ENCODE measurements at regions of chr3 and their contacts with region 1.

Region 1: GRCh38 chr3:14947886-14948555 is 638 bp downstream of the NR2C2 start:
- DNase-seq: peak; percentile 94 to 96
- H3K4me3 ChIP-seq: peak overlapping the region; percentile 79 to 95 (median 79)
- H3K27ac ChIP-seq: peak overlapping the region; percentile 97 to 99
- H3K4me1 ChIP-seq: peaks cover 0 to 9% of the 10 kb centered on the region in 2 donors
- H3K27me3 ChIP-seq: no peaks in the 10 kb centered on the region
- CTCF ChIP-seq: no peak
- POLR2A ChIP-seq: no peak

Region 2: DNA sequence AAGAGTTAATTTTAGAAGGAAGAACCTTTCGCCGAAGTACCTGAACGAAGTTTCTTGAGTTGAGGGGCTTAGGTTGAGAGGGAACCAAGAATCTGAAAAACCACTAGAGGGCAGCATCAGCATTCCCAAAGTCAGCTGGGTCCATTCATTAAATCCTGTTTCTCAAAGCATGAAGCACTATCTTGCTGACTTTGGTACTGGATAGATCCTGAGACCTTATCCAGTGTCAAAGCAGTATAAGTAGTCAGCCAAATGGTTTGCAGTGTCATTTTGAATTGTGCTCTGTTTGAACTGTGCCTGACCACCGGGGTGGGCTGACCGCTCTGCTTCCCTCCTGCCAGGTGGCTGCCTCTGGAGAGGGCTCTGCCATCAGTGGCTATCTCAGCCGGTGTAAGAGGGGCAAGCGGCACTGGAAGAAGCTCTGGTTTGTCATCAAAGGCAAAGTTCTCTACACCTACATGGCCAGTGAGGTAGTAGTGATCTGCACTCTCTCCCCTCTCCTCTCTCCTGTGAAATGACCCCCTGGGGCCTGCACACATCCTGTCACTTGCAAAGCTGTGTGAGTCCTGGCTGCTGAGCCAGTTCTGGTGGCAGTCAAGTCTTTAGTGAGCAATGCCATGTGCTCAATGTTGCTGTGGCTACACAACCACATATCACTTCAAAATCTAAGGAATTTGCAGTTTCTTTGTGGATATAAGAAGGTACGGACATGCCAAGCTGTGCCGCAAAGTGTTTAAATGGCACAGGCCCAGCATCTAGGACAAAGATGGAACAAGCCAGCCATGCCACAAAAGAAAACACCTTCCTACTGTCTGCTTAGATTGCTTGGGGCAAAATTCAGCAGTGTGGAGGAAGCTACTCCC is 22.1 kb before region 1 on chr3:
- intact Hi-C with region 1: no loop called
- DNase-seq: no peak
- H3K4me3 ChIP-seq: no peak overlapping the region
- H3K27ac ChIP-seq: no peak overlapping the region
- H3K4me1 ChIP-seq: peaks cover 0 to 6% of the 10 kb centered on the region in 2 donors
- H3K27me3 ChIP-seq: no peaks in the 10 kb centered on the region
- CTCF ChIP-seq: peak; percentile 4 to 60 (median 53)
- POLR2A ChIP-seq: no peak

Region 3: DNA sequence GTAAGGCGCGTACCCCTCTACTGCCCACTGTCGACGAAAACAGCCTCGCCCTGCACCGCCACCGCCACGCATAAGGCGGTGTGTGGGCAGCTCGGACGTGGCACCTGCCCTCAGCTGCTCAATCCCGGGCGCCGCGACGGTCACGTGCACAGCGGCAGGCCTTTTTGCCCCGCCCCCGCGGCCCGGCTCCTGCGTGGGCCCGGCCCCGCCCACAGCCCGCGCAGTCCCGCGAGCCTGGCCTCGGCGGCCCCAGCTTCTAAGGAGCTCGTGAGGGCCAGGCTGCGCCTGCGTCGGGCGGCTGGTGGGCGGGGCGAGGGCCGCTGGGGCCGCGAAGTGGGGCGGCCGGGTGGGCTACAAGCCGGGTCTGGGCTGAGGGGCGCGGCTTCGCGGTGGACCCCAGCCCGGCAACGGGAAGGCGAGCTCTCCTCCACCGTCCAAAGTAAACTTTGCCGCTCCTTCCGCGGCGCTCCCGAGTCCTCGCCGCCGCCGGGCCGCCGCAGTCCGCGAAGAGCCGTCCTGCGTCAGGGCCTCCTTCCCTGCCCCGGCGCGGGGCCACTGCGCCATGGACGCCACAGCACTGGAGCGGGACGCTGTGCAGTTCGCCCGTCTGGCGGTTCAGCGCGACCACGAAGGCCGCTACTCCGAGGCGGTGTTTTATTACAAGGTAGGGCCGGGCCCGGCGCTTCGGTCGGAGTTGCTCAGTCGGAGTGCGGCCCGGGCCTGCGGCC is 258.1 kb after region 1 on chr3 and contains the start of gene CAPN7:
- intact Hi-C with region 1: loop called (anchors 10 kb)
- DNase-seq: peak; percentile 94
- H3K4me3 ChIP-seq: peak within 1 kb of the TSS; percentile 73 to 94 (median 85)
- H3K27ac ChIP-seq: peak within 1 kb of the TSS; percentile 95 to 98
- H3K4me1 ChIP-seq: peaks cover 0 to 8% of the 10 kb centered on the region in 2 donors
- H3K27me3 ChIP-seq: no peaks in the 10 kb centered on the region
- CTCF ChIP-seq: peak in 1 of 3 donors; percentile 42
- POLR2A ChIP-seq: peak; percentile 71
- total RNA-seq, gene CAPN7: 79.0 to 112 (median 91.4) TPM

Measured in breast epithelium (tissue), 4 donors.